CD14-positive monocyte (primary cell): ENCODE measurements at regions of chr12 and their contacts with region 1.

Region 1: DNA sequence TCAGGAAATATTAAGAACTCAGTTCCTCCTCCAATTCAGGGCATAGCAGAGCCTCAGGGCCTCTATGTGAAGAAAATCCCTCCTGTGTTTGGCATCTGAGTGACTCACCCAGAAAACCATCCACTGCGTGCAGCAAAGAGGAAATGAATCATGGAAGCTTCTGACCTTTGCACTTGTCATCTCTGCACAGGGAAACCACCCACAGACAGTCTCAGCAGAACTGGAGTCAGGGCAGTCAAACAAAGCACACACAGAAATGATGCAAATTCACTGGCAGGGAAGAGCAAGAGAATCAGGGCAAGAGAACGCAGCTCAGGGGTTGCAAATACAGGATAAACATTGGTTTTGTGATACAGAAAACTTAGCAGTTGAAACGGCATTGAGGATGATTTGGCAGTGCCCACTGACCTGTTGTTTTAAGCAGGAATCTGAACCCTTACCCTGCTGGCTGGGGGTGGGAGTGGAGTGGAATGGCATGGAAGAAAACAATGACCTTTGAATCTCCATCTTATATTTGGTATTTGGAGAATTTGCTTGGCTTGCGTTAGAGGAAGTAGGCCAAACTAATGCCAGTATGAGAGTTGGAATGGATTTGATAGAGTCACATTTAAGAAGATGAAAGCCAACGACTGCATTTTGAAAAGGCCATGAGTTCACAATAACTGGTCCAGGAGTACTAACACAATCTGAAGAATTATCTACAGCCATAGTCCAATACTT is 53.5 kb downstream of the PHLDA1 start:
- DNase-seq: peak; percentile 98 to 100 (median 99)
- H3K4me3 ChIP-seq: no peak overlapping the region
- H3K4me3 Mint-ChIP-seq: peak overlapping the region; percentile 4 to 79
- H3K27ac ChIP-seq: peak overlapping the region; percentile 95
- H3K27ac Mint-ChIP-seq: peak overlapping the region; percentile 98 to 100 (median 99)
- H3K4me1 ChIP-seq: peaks cover 61 to 64% of the 10 kb centered on the region in 2 donors
- H3K4me1 Mint-ChIP-seq: peaks cover 70% of the 10 kb centered on the region
- H3K27me3 ChIP-seq: no peaks in the 10 kb centered on the region
- H3K27me3 Mint-ChIP-seq: peaks cover 0 to 2% (median 0%) of the 10 kb centered on the region in 3 donors
- CTCF ChIP-seq: no peak

Region 2: DNA sequence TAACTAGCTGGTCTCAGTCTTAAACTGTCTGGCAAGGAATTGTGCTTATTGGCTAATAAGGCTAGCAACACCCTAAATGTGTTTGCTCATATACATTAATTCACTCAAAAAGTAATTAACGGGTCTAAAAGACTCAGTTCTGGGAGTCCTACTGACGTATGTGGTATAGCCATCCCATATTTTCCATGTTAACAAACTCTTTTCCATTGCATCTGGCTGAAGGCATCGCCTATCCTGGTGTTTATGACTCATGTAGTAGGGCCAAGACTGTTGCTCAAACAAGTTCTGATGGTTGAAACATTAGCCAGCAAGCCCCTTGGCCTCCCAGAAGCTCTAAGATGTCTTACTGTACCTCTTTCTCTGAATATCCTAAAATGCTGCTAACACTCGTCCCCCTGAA is 45.0 kb before region 1 on chr12:
- intact Hi-C with region 1: loop called in 1 of 2 experiments (anchors 10 kb)
- DNase-seq: peak in 2 of 3 donors; percentile 41 to 48
- H3K4me3 ChIP-seq: no peak overlapping the region
- H3K4me3 Mint-ChIP-seq: peak overlapping the region in 1 of 2 donors; percentile 37
- H3K27ac ChIP-seq: no peak overlapping the region
- H3K27ac Mint-ChIP-seq: no peak overlapping the region
- H3K4me1 ChIP-seq: peaks cover 9 to 13% of the 10 kb centered on the region in 2 donors
- H3K4me1 Mint-ChIP-seq: peaks cover 12% of the 10 kb centered on the region
- H3K27me3 ChIP-seq: peaks cover 33 to 41% of the 10 kb centered on the region in 2 donors
- H3K27me3 Mint-ChIP-seq: peaks cover 17 to 36% (median 25%) of the 10 kb centered on the region in 3 donors
- CTCF ChIP-seq: no peak

Region 3: GRCh38 chr12:75944097-75944904 is 33.8 kb before region 1 on chr12:
- intact Hi-C with region 1: loop called (anchors 5 to 10 kb)
- DNase-seq: peak; percentile 74 to 89 (median 88)
- H3K4me3 ChIP-seq: no peak overlapping the region
- H3K4me3 Mint-ChIP-seq: peak overlapping the region in 1 of 2 donors; percentile 71
- H3K27ac ChIP-seq: peak overlapping the region in 1 of 2 donors; percentile 89
- H3K27ac Mint-ChIP-seq: peak overlapping the region; percentile 86 to 97 (median 93)
- H3K4me1 ChIP-seq: peaks cover 16 to 18% of the 10 kb centered on the region in 2 donors
- H3K4me1 Mint-ChIP-seq: peaks cover 19% of the 10 kb centered on the region
- H3K27me3 ChIP-seq: no peaks in the 10 kb centered on the region
- H3K27me3 Mint-ChIP-seq: peaks cover 0 to 6% (median 3%) of the 10 kb centered on the region in 3 donors
- CTCF ChIP-seq: no peak